ENCODE measurements at regions of chr10 and their contacts with region 1.

Region 1: GRCh38 chr10:32055813-32056600 is at the start of gene KIF5B:
- DNase-seq: peak; percentile 92 to 95
- ATAC-seq: peak; percentile 95 to 96 (median 96)
- H3K4me3 ChIP-seq: peak within 1 kb of the TSS; percentile 78
- H3K27ac ChIP-seq: peak within 1 kb of the TSS; percentile 98
- H3K4me1 ChIP-seq: peaks cover 35% of the 10 kb centered on the region
- H3K27me3 ChIP-seq: no peaks in the 10 kb centered on the region
- CTCF ChIP-seq: no peak
- total RNA-seq, gene KIF5B: 87.7 to 124 (median 100) TPM

Region 2: GRCh38 chr10:32139223-32140073 is 83.4 kb after region 1 on chr10:
- intact Hi-C with region 1: loop called in 1 of 2 experiments (anchors 5 kb)
- DNase-seq: peak; percentile 85 to 87
- ATAC-seq: peak; percentile 91 to 94 (median 93)
- H3K4me3 ChIP-seq: no peak overlapping the region
- H3K27ac ChIP-seq: peak overlapping the region; percentile 67
- H3K4me1 ChIP-seq: peaks cover 10% of the 10 kb centered on the region
- H3K27me3 ChIP-seq: no peaks in the 10 kb centered on the region
- CTCF ChIP-seq: no peak

Measured in psoas muscle (tissue), 8 donors.